ENCODE measurements at regions of chr1 and their contacts with region 1.

Region 1: GRCh38 chr1:15788624-15789301 is 18.7 kb downstream of the UQCRHL start:
- H3K4me3 Mint-ChIP-seq: peak overlapping the region; percentile 67
- H3K27ac Mint-ChIP-seq: peak overlapping the region; percentile 81
- H3K4me1 Mint-ChIP-seq: peaks cover 18% of the 10 kb centered on the region
- H3K27me3 Mint-ChIP-seq: peaks cover 10% of the 10 kb centered on the region

Region 2: DNA sequence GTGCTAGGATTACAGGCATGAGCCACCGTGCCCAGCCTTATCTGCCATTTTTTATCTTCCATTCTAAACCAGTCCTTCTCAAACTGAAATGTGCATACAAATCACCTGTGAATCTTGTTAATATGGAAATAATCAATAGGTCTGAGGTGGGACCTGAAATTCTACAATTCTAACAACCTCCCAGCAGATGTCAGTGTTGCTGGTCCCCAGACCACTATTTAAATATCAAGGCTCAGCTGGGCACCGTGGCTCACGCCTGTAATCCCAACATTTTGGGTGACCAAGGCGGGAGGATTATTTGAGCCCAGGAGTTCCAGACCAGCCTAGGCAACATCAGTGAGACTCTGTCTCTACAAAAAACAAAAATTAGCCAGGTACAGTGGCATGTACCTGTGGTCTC is 14.6 kb after region 1 on chr1:
- intact Hi-C with region 1: no loop called
- H3K4me3 Mint-ChIP-seq: no peak overlapping the region
- H3K27ac Mint-ChIP-seq: no peak overlapping the region
- H3K4me1 Mint-ChIP-seq: peaks cover 13% of the 10 kb centered on the region
- H3K27me3 Mint-ChIP-seq: peaks cover 47% of the 10 kb centered on the region

Region 3: DNA sequence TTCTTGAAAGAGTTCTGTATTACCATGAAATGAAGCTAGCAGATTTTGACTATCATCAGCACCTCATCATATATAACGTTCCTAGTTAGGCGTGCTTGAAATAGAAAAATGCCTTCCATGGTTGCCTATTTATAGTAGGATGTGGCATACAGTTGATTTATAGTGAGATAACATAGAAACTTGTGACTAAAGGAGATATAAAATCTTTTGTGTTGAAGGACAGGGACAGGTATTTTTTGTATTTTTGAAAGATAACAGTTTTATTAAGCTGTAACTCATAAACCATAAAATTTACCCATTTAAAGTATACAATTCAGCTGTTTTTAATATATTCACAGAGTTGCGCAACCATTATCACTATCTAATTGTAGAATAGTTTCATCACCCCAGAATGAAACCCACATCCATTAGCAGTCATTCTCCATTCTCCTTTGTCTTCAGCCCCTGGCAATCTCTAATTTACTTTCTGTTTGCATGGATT is 78.0 kb after region 1 on chr1:
- intact Hi-C with region 1: no loop called
- H3K4me3 Mint-ChIP-seq: no peak overlapping the region
- H3K27ac Mint-ChIP-seq: no peak overlapping the region
- H3K4me1 Mint-ChIP-seq: peaks cover 46% of the 10 kb centered on the region
- H3K27me3 Mint-ChIP-seq: no peaks in the 10 kb centered on the region

Region 4: GRCh38 chr1:15994590-15995351 is 206.0 kb after region 1 on chr1:
- intact Hi-C with region 1: loop called (anchors 1 kb)
- H3K4me3 Mint-ChIP-seq: no peak overlapping the region
- H3K27ac Mint-ChIP-seq: no peak overlapping the region
- H3K4me1 Mint-ChIP-seq: no peaks in the 10 kb centered on the region
- H3K27me3 Mint-ChIP-seq: peaks cover 6% of the 10 kb centered on the region